CD8-positive, alpha-beta T cell (primary cell): ENCODE measurements at regions of chr10 and their contacts with region 1.

Region 1: GRCh38 chr10:28663576-28664313 is 13.6 kb upstream of the BAMBI start:
- DNase-seq: peak; percentile 31 to 78 (median 67)
- ATAC-seq: peak; percentile 88
- H3K4me3 ChIP-seq: no peak overlapping the region
- H3K4me3 Mint-ChIP-seq: no peak overlapping the region
- H3K27ac ChIP-seq: no peak overlapping the region
- H3K27ac Mint-ChIP-seq: no peak overlapping the region
- H3K4me1 ChIP-seq: peaks cover 4% of the 10 kb centered on the region
- H3K4me1 Mint-ChIP-seq: peaks cover 10% of the 10 kb centered on the region
- H3K27me3 ChIP-seq: peaks cover 10 to 15% of the 10 kb centered on the region in 2 experiments
- H3K27me3 Mint-ChIP-seq: peaks cover 40% of the 10 kb centered on the region
- CTCF ChIP-seq: peak; percentile 86

Region 2: GRCh38 chr10:28432210-28432676 is 231.5 kb before region 1 on chr10:
- CTCF ChIA-PET with region 1: no interaction called
- POLR2A ChIA-PET with region 1: no interaction called
- intact Hi-C with region 1: loop called in 1 of 2 experiments (anchors 10 kb)
- DNase-seq: peak in 7 of 9 experiments; percentile 1 to 64 (median 18)
- ATAC-seq: peak; percentile 51
- H3K4me3 ChIP-seq: peak overlapping the region; percentile 17 to 46
- H3K4me3 Mint-ChIP-seq: peak overlapping the region; percentile 68
- H3K27ac ChIP-seq: no peak overlapping the region
- H3K27ac Mint-ChIP-seq: no peak overlapping the region
- H3K4me1 ChIP-seq: no peaks in the 10 kb centered on the region
- H3K4me1 Mint-ChIP-seq: peaks cover 8% of the 10 kb centered on the region
- H3K27me3 ChIP-seq: peaks cover 0 to 1% of the 10 kb centered on the region in 2 experiments
- H3K27me3 Mint-ChIP-seq: peaks cover 11% of the 10 kb centered on the region
- CTCF ChIP-seq: peak; percentile 86

Region 3: GRCh38 chr10:28604567-28605536 is 58.9 kb before region 1 on chr10:
- CTCF ChIA-PET with region 1: no interaction called
- POLR2A ChIA-PET with region 1: no interaction called
- intact Hi-C with region 1: no loop called
- DNase-seq: no peak
- ATAC-seq: no peak
- H3K4me3 ChIP-seq: no peak overlapping the region
- H3K4me3 Mint-ChIP-seq: no peak overlapping the region
- H3K27ac ChIP-seq: no peak overlapping the region
- H3K27ac Mint-ChIP-seq: peak overlapping the region; percentile 20
- H3K4me1 ChIP-seq: peaks cover 33% of the 10 kb centered on the region
- H3K4me1 Mint-ChIP-seq: peaks cover 52% of the 10 kb centered on the region
- H3K27me3 ChIP-seq: no peaks in the 10 kb centered on the region
- H3K27me3 Mint-ChIP-seq: no peaks in the 10 kb centered on the region
- CTCF ChIP-seq: no peak

Region 4: DNA sequence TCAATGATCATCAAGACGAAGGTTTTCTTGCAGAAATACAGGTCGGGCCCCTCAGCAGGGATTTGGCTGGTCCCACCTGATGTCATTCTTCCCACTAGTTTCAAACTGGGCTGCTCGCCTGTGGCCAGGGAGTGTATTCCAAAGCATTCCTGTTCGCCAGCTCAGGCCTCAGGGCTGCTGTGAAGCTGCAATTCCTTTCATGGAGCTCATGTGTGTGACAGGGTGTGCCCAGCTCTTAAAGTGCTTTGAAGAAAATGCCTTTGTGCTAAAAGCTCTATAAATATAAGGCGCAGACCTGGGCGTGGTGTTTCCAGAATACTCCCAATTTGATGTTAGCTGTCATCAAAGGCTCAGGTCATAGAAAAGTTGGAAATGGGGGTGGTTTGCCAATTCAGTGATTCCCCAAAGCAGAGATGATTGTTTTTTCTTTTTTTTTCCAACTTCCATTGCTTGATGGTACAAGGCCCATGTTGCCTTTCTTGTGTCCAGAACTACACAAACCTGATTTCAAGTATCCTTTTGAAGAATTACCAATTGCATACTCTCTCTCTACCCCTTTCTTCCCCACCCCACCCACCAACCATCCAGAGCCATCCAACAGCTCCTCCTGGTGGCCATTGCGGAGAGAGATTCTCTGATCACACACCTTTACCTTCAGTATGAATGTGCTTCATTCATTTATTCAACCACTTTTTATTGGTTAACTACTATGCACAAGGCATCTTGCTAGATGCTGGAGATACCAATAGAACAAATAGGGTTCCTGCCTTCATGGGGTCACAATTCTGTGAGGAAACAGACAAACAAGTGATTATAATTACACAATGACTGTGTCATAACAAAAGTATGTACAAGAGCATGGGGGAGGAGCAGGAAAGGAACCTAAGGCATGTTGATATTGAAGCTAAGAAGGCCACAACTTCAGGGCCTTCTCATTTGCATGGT is 327.9 kb after region 1 on chr10:
- CTCF ChIA-PET with region 1: interaction called, 34 read pairs
- POLR2A ChIA-PET with region 1: no interaction called
- intact Hi-C with region 1: loop called (anchors 1 to 2 kb)
- DNase-seq: peak in 7 of 9 experiments; percentile 5 to 47 (median 27)
- ATAC-seq: no peak
- H3K4me3 ChIP-seq: no peak overlapping the region
- H3K4me3 Mint-ChIP-seq: no peak overlapping the region
- H3K27ac ChIP-seq: no peak overlapping the region
- H3K27ac Mint-ChIP-seq: no peak overlapping the region
- H3K4me1 ChIP-seq: no peaks in the 10 kb centered on the region
- H3K4me1 Mint-ChIP-seq: no peaks in the 10 kb centered on the region
- H3K27me3 ChIP-seq: no peaks in the 10 kb centered on the region
- H3K27me3 Mint-ChIP-seq: peaks cover 9% of the 10 kb centered on the region
- CTCF ChIP-seq: no peak

Region 5: DNA sequence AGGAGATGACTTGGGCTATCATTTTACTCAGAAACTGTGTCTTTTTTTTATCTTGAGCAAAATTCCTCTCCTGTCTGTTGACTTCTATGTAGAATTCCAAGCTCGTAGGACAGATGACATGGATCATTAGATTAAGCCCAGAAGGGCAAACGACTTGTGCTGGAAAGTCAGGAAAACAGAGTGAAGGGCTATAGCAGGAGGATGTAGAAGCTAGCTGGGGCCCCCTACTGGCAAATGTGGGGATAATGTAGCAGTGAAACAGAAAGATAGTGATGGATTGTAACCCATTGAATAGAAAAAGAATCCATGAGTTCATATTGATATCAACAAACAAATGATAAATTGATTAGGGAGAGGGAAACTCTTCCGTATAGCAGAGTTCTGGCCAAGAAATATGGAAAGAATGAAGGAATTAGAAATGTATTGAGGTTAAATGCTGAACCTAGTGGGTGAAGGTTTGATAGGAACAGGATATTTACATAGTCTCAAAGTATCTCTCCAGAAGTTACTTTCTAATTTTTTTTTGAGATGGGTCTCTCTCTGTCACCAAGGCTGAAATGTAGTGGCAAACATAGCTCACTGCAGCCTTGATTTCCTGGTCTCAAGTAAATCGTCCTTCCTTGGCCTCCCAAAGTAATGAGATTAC is 728.8 kb after region 1 on chr10:
- CTCF ChIA-PET with region 1: interaction called, 3 read pairs
- POLR2A ChIA-PET with region 1: no interaction called
- intact Hi-C with region 1: loop called (anchors 2 kb)
- DNase-seq: peak in 5 of 9 experiments; percentile 19 to 52 (median 33)
- ATAC-seq: peak; percentile 69
- H3K4me3 ChIP-seq: no peak overlapping the region
- H3K4me3 Mint-ChIP-seq: no peak overlapping the region
- H3K27ac ChIP-seq: no peak overlapping the region
- H3K27ac Mint-ChIP-seq: no peak overlapping the region
- H3K4me1 ChIP-seq: no peaks in the 10 kb centered on the region
- H3K4me1 Mint-ChIP-seq: no peaks in the 10 kb centered on the region
- H3K27me3 ChIP-seq: no peaks in the 10 kb centered on the region
- H3K27me3 Mint-ChIP-seq: peaks cover 8% of the 10 kb centered on the region
- CTCF ChIP-seq: peak; percentile 90

Region 6: GRCh38 chr10:29496341-29497162 is 832.8 kb after region 1 on chr10:
- CTCF ChIA-PET with region 1: no interaction called
- POLR2A ChIA-PET with region 1: no interaction called
- intact Hi-C with region 1: loop called in 1 of 2 experiments (anchors 5 kb)
- DNase-seq: peak; percentile 21 to 73 (median 45)
- ATAC-seq: no peak
- H3K4me3 ChIP-seq: no peak overlapping the region
- H3K4me3 Mint-ChIP-seq: no peak overlapping the region
- H3K27ac ChIP-seq: no peak overlapping the region
- H3K27ac Mint-ChIP-seq: no peak overlapping the region
- H3K4me1 ChIP-seq: no peaks in the 10 kb centered on the region
- H3K4me1 Mint-ChIP-seq: peaks cover 2% of the 10 kb centered on the region
- H3K27me3 ChIP-seq: no peaks in the 10 kb centered on the region
- H3K27me3 Mint-ChIP-seq: no peaks in the 10 kb centered on the region
- CTCF ChIP-seq: peak; percentile 96